Activated naive CD4-positive, alpha-beta T cell treated with anti-CD3 and anti-CD28 coated beads for 36 hours (primary cell): ENCODE measurements at regions of chr7 and their contacts with region 1.

Region 1: DNA sequence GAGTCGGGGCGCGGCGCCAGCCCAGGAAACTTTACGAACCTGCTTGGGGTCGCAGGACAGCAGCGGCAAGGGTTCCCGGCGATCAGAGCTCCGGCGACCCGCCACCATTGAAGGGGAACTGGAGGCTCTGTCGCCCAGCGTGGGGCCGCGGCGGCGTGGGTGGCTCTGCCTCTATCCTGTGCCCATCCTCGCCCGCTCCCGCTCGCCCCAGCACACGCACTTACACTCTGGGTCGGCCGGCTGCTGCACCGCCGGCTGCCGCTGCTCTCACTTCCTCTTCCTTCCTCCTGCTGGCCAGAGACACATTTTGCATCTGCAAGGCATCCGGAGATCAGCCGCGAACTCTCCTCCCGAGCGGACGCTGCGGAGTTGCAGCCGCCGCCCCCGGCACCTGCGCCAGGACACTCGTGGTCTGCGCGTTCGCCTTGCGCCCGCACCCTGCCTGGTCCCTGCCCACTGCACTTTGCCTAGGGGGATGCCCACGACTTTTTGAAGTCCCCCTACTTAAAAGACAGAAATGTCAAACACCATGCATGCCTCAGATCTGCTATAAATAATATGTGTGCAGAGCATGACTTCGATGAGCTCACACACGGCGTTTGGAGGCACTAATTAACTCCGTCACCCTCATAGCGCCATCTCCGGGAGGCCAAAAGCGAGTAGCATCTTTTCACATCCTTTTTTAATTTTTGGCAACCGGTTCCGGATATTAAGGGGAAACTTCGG is at the start of gene ELMO1:
- DNase-seq: peak; percentile 81
- H3K4me3 Mint-ChIP-seq: peak within 1 kb of the TSS; percentile 94
- H3K27ac Mint-ChIP-seq: peak within 1 kb of the TSS; percentile 95
- H3K4me1 Mint-ChIP-seq: peaks cover 45% of the 10 kb centered on the region
- H3K27me3 Mint-ChIP-seq: no peaks in the 10 kb centered on the region
- total RNA-seq, gene ELMO1: 129 to 137 TPM

Region 2: GRCh38 chr7:36600869-36601530 is 847.8 kb before region 1 on chr7:
- CTCF ChIA-PET with region 1: no interaction called
- intact Hi-C with region 1: loop called (anchors 10 kb)
- DNase-seq: peak; percentile 60
- H3K4me3 Mint-ChIP-seq: no peak overlapping the region
- H3K27ac Mint-ChIP-seq: no peak overlapping the region
- H3K4me1 Mint-ChIP-seq: peaks cover 73% of the 10 kb centered on the region
- H3K27me3 Mint-ChIP-seq: no peaks in the 10 kb centered on the region

Region 3: DNA sequence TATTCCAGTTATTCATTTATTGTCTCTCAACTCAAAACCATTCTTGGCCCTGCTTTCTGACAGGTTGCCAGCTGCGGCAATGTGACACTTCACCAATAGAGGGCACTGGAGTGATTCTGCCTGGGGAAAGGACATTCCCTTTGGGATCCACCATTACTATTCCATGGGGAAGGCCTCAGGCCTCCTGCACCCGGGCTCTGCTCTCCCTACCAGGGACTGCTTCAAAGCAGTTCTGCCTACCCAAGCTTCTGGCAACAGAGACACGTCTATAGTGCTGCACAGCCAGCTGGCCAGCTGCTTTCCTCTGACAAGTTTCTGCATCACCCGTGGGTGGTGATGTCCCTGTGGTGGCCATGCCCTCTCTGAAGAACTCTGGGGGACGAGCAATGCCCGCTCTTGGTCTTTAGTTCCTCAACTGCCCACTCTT is 164.0 kb before region 1 on chr7:
- CTCF ChIA-PET with region 1: interaction called, 5 read pairs
- intact Hi-C with region 1: loop called (anchors 2 kb)
- DNase-seq: peak; percentile 53
- H3K4me3 Mint-ChIP-seq: no peak overlapping the region
- H3K27ac Mint-ChIP-seq: no peak overlapping the region
- H3K4me1 Mint-ChIP-seq: peaks cover 72% of the 10 kb centered on the region
- H3K27me3 Mint-ChIP-seq: no peaks in the 10 kb centered on the region

Region 4: GRCh38 chr7:37408291-37409228 is 40.2 kb before region 1 on chr7:
- CTCF ChIA-PET with region 1: interaction called, 14 read pairs
- intact Hi-C with region 1: loop called (anchors 1 kb)
- DNase-seq: peak; percentile 44
- H3K4me3 Mint-ChIP-seq: peak overlapping the region; percentile 77
- H3K27ac Mint-ChIP-seq: peak overlapping the region; percentile 98
- H3K4me1 Mint-ChIP-seq: peaks cover 87% of the 10 kb centered on the region
- H3K27me3 Mint-ChIP-seq: no peaks in the 10 kb centered on the region

Region 5: DNA sequence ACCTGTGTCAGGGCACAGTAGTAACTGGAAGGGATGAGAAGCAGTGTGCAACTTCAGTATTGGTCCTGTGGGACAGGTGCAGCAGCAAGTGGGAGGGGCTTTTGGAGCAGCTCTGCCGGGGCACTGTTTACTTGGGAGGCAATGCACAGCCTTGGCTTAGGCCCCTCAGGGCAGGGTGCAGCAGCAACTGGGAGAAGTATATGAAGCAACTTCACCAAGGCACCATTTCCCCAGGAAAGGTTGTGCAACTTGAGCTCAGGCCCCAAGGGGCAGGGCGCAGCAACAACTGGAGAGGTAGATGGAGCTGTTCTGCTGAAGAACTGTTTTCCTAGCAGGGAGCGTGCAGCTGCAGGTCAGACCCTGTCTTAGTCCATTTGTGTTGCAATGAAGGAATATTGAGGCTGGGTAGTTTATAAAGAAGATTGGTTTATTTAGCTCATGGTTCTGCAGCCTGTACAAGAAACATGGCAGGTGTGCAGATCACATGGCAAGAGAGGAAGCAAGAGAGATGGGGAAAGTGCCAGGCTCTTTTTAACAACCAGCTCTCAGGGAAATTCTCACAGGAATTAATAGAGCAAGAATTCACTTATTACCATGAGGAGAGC is 245.5 kb after region 1 on chr7:
- CTCF ChIA-PET with region 1: no interaction called
- intact Hi-C with region 1: no loop called
- DNase-seq: no peak
- H3K4me3 Mint-ChIP-seq: no peak overlapping the region
- H3K27ac Mint-ChIP-seq: no peak overlapping the region
- H3K4me1 Mint-ChIP-seq: no peaks in the 10 kb centered on the region
- H3K27me3 Mint-ChIP-seq: peaks cover 2% of the 10 kb centered on the region

Region 6: GRCh38 chr7:37751096-37751495 is 302.3 kb after region 1 on chr7:
- CTCF ChIA-PET with region 1: no interaction called
- intact Hi-C with region 1: no loop called
- DNase-seq: no peak
- H3K4me3 Mint-ChIP-seq: no peak overlapping the region
- H3K27ac Mint-ChIP-seq: no peak overlapping the region
- H3K4me1 Mint-ChIP-seq: no peaks in the 10 kb centered on the region
- H3K27me3 Mint-ChIP-seq: peaks cover 2% of the 10 kb centered on the region

Region 7: DNA sequence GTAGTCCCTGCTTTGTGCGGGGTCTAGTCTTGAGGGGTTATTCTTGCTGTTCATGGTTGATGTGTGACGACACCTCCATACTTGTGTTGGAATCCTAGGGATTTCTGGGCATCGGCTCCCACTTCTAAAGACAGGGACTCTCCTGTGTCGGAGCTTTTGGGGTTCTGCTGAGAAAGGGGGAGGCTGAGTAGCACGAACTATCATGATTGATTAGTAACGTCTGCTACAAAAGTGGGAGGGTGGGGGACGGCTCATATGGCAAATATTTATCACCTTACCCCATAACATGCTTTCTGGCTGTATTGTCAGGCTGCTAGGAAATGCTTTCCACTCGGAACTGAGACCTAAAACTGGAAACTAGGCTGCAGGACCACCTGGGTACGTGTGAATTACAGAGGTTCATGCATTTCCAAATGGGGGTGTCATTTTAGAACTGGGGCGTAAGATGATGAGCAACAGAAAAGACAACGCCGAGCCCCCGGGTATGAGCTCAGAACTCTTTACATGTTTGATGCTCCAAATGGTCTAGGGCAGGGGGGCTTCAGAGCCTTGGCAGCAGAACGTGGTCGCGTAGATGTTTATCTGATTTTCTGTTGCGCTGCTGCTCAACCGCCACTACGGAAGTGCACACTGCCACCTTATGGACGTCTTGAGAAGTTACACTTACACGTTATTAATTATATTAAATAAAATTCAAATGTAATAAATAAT is 384.5 kb after region 1 on chr7:
- CTCF ChIA-PET with region 1: interaction called, 3 read pairs
- intact Hi-C with region 1: loop called (anchors 10 kb)
- DNase-seq: peak; percentile 57
- H3K4me3 Mint-ChIP-seq: peak overlapping the region; percentile 73
- H3K27ac Mint-ChIP-seq: no peak overlapping the region
- H3K4me1 Mint-ChIP-seq: peaks cover 5% of the 10 kb centered on the region
- H3K27me3 Mint-ChIP-seq: peaks cover 4% of the 10 kb centered on the region

Region 8: DNA sequence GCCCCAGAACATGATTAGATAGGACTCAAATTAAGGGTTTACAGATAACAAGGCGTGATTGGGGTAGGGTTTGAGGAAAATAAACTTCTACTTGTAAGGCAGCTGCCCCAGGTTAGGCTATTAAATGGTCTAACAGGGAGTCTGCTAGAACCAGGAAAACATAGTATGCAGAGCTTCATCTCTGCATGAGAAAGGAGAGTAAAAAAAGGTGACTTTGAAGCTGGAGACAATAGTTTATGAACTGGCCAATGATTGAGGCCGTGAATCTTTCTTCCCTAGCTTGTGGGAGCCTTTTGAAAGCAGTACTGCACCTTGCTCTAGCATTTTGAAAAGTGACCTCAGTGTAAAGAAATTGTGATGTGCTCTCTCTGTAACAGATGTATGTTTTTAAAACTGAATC is 680.8 kb after region 1 on chr7:
- CTCF ChIA-PET with region 1: no interaction called
- intact Hi-C with region 1: no loop called
- DNase-seq: no peak
- H3K4me3 Mint-ChIP-seq: no peak overlapping the region
- H3K27ac Mint-ChIP-seq: no peak overlapping the region
- H3K4me1 Mint-ChIP-seq: peaks cover 3% of the 10 kb centered on the region
- H3K27me3 Mint-ChIP-seq: peaks cover 12% of the 10 kb centered on the region